ENCODE measurements at regions of chr2 and their contacts with region 1.

Region 1: DNA sequence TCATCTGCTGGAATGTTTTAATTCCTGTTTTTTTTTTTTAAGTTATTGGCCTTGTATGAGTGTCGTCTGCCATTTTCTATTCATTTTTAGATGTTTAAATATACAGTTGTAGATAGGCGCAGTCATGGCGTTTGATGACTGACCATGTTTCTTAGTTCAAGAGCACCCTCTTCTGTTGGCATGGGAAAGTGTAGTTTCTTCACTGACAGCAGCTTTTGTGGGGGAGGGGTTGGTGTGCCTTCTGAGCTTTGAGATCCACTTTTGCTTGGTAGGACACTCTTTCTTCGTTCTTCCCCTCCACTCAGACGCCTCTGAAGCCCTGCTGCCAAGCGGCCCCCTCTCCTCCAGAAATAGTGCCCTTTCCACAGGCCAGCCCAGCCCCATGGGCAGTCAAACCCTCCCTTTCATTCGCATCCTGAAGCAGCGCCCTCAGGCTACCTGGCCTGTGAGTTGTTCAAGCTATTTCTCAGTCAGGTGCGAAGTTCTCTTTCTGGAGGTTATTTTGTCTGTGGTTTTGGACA is 492.0 kb downstream of the TNS1 start:
- DNase-seq: peak; percentile 78
- H3K4me3 ChIP-seq: no peak overlapping the region; a peak in 1 of 4 replicates
- H3K27ac ChIP-seq: peak overlapping the region in 1 of 2 experiments; percentile 48; a peak in 1 of 4 replicates
- H3K4me1 ChIP-seq: peaks cover 8 to 11% of the 10 kb centered on the region in 2 experiments; a peak in 3 of 4 replicates
- H3K27me3 ChIP-seq: no peaks in the 10 kb centered on the region
- CTCF ChIP-seq: peak; percentile 77
- EP300 ChIP-seq: no peak
- RAD21 ChIP-seq: peak; percentile 99

Region 2: DNA sequence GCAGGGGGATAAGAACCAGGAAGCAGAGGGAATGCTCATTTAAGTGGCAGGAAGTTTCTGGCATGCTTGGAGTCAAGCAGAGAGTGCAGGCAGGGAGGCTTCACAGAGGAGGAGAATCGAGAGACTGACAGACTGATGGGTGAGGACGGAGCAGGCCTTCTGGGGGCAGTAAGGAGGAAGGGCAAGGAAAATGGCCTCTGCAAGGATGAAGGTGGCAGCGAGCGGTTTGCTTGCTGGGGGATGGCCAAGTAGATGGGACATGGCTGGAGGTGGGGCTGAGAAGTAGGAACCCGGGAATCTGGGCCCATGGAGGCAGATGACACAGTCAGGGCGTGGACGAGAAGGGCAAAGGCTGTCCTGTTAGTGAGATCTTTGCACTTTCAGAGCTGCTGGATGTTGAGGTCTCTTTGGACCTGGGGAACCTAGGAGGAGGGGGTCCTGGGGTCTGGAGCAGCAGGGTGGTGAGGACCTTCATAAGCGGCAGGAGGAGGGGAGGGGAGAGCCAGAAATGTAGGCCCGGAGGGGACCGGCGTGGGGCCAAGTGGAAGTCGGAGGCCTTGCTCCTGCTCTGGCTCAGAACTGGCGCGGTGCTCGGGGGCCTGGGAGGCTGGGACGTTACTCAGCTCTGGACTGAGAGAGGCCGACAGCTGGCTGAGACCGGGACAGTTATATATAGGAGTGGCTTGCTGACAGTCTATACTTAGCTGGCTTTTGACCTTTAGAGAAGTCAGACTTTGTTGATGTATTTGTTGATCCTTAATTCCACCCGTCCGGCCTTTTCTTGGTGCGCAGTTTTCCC is 831.4 kb before region 1 on chr2:
- CTCF ChIA-PET with region 1: interaction called, 45 read pairs
- POLR2A ChIA-PET with region 1: no interaction called
- DNase-seq: no peak
- H3K4me3 ChIP-seq: no peak overlapping the region
- H3K27ac ChIP-seq: no peak overlapping the region
- H3K4me1 ChIP-seq: peaks cover 6 to 8% of the 10 kb centered on the region in 2 experiments; a peak in 2 of 4 replicates
- H3K27me3 ChIP-seq: no peaks in the 10 kb centered on the region
- CTCF ChIP-seq: no peak
- EP300 ChIP-seq: no peak
- RAD21 ChIP-seq: no peak

Region 3: GRCh38 chr2:216687646-216688045 is 823.2 kb before region 1 on chr2:
- CTCF ChIA-PET with region 1: interaction called, 45 read pairs
- POLR2A ChIA-PET with region 1: no interaction called
- DNase-seq: no peak
- H3K4me3 ChIP-seq: no peak overlapping the region; a peak in 1 of 4 replicates
- H3K27ac ChIP-seq: no peak overlapping the region
- H3K4me1 ChIP-seq: peaks cover 12 to 29% of the 10 kb centered on the region in 2 experiments; a peak in 3 of 4 replicates
- H3K27me3 ChIP-seq: no peaks in the 10 kb centered on the region
- CTCF ChIP-seq: peak; percentile 53
- EP300 ChIP-seq: no peak
- RAD21 ChIP-seq: no peak

Region 4: GRCh38 chr2:216698895-216699294 is 811.9 kb before region 1 on chr2:
- CTCF ChIA-PET with region 1: interaction called, 74 read pairs
- POLR2A ChIA-PET with region 1: no interaction called
- DNase-seq: peak; percentile 55
- H3K4me3 ChIP-seq: no peak overlapping the region
- H3K27ac ChIP-seq: peak overlapping the region in 1 of 2 experiments; percentile 98; a peak in 2 of 4 replicates
- H3K4me1 ChIP-seq: peaks cover 44 to 55% of the 10 kb centered on the region in 2 experiments
- H3K27me3 ChIP-seq: no peaks in the 10 kb centered on the region
- CTCF ChIP-seq: peak; percentile 77
- EP300 ChIP-seq: peak in 1 of 2 experiments; percentile 34; a peak in 1 of 4 replicates
- RAD21 ChIP-seq: peak; percentile 99

Region 5: DNA sequence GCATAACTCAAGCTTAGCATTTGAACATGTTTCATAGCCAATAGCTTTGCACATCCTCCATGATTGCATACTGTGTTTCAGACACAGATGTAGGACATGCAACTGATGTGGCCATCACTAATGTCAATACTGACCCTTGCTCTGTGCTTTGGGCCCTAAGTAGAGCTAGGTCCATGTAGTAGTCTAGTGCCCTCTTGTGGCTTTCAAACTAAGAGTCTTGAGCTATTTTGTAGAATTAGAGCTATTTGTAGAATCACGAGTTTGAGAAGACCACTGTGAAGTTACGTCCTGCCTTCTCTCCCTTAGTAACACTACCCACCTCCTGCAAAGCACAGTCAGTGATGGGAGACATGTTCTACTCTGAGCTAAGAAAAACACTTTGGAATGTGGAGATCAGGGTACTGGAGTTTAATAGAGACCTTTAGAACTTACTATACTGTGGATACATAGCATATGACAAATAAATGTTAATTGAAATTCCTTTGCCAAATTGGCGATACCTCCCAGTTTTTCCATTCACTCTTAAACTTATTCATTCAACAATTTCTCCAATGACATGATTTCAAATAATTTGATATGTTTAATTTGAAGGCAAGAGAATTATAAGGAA is 344.5 kb before region 1 on chr2:
- CTCF ChIA-PET with region 1: interaction called, 12 read pairs
- POLR2A ChIA-PET with region 1: no interaction called
- DNase-seq: peak; percentile 30
- H3K4me3 ChIP-seq: no peak overlapping the region
- H3K27ac ChIP-seq: no peak overlapping the region
- H3K4me1 ChIP-seq: peaks cover 4 to 7% of the 10 kb centered on the region in 2 experiments; a peak in 2 of 4 replicates
- H3K27me3 ChIP-seq: no peaks in the 10 kb centered on the region
- CTCF ChIP-seq: peak; percentile 73
- EP300 ChIP-seq: no peak
- RAD21 ChIP-seq: peak; percentile 87

Region 6: DNA sequence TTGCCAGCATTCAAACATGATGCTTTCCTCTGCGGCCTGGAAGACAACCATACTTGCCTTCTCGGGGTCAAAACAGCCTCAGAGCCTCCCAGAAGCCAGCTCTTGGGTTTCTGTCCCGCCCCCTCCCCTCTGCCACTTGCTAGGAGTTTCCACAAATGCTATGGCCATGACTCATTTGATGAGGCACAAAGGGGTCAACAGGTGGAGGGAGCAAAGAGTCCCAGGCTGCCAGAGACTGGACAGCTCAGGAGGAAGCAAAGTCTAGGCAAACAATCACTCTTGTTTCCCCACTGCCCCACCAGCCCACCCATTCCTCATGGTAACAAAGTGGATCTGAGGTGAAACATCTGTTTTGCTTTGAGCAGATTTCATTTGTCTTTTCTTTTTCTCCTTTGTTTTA is 59.2 kb before region 1 on chr2:
- CTCF ChIA-PET with region 1: no interaction called
- POLR2A ChIA-PET with region 1: no interaction called
- DNase-seq: no peak
- H3K4me3 ChIP-seq: no peak overlapping the region
- H3K27ac ChIP-seq: no peak overlapping the region
- H3K4me1 ChIP-seq: peaks cover 0 to 7% of the 10 kb centered on the region in 2 experiments; a peak in 2 of 4 replicates
- H3K27me3 ChIP-seq: no peaks in the 10 kb centered on the region
- CTCF ChIP-seq: no peak
- EP300 ChIP-seq: no peak
- RAD21 ChIP-seq: no peak

Region 7: DNA sequence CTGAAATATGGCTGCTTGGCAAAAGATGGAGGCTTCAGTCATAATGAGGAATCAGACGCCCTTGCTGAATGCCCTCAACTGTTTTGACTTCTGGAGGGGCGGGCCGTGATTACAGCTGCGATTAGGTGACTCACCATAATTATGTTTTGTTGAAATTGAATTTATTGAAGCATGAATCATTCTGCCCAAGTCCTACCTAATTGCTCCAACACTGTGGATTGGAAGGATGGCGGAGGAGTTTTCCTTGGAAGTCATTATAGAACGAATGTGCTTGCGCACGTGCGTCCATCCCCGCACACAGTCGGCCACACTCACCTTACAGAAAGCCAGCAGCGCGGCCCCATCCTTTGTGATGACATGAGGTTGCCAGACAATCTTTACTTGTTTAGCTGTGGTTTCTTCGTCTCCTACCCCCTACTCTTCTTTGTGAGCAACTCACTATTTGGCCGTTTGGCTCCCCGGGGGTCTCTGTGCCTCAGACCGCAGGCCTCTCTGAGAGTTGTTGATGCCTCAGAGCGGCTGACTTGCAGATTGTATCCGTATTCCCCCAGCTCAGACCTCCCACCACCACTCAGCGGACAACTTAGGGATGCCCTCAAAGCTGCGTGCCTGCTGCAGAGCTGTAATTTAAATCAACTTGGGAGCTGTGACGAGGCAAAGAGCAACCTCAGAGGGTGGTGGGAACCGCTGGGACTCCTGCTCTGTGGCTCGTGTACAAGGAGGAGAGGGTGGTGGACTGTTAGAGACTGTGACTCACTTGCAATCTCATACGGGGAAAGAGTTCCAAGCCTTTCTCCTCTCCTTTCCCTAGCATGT is 21.5 kb before region 1 on chr2:
- CTCF ChIA-PET with region 1: no interaction called
- POLR2A ChIA-PET with region 1: no interaction called
- DNase-seq: no peak
- H3K4me3 ChIP-seq: no peak overlapping the region
- H3K27ac ChIP-seq: no peak overlapping the region; a peak in 1 of 4 replicates
- H3K4me1 ChIP-seq: peaks cover 0 to 3% of the 10 kb centered on the region in 2 experiments; a peak in 1 of 4 replicates
- H3K27me3 ChIP-seq: no peaks in the 10 kb centered on the region
- CTCF ChIP-seq: no peak
- EP300 ChIP-seq: no peak
- RAD21 ChIP-seq: no peak

Region 8: GRCh38 chr2:217521820-217522219 is 11.0 kb after region 1 on chr2:
- CTCF ChIA-PET with region 1: interaction called, 10 read pairs
- POLR2A ChIA-PET with region 1: no interaction called
- DNase-seq: no peak
- H3K4me3 ChIP-seq: no peak overlapping the region
- H3K27ac ChIP-seq: no peak overlapping the region
- H3K4me1 ChIP-seq: 0 out of 4 replicates have a peak, but pooled peaks cover 0 to 7% of the 10 kb centered on the region in 2 experiments
- H3K27me3 ChIP-seq: peaks cover 7% of the 10 kb centered on the region; the same call in 1 of the 2 replicates
- CTCF ChIP-seq: no peak
- EP300 ChIP-seq: no peak
- RAD21 ChIP-seq: no peak

Region 9: GRCh38 chr2:217573571-217573970 is 62.7 kb after region 1 on chr2:
- CTCF ChIA-PET with region 1: no interaction called
- POLR2A ChIA-PET with region 1: no interaction called
- DNase-seq: no peak
- H3K4me3 ChIP-seq: no peak overlapping the region
- H3K27ac ChIP-seq: no peak overlapping the region
- H3K4me1 ChIP-seq: no peaks in the 10 kb centered on the region; a peak in 1 of 4 replicates
- H3K27me3 ChIP-seq: no peaks in the 10 kb centered on the region
- CTCF ChIP-seq: no peak
- EP300 ChIP-seq: no peak
- RAD21 ChIP-seq: no peak